Gastrocnemius medialis (tissue), 4 donors: ENCODE measurements at regions of chr5 and their contacts with region 1.

Region 1: DNA sequence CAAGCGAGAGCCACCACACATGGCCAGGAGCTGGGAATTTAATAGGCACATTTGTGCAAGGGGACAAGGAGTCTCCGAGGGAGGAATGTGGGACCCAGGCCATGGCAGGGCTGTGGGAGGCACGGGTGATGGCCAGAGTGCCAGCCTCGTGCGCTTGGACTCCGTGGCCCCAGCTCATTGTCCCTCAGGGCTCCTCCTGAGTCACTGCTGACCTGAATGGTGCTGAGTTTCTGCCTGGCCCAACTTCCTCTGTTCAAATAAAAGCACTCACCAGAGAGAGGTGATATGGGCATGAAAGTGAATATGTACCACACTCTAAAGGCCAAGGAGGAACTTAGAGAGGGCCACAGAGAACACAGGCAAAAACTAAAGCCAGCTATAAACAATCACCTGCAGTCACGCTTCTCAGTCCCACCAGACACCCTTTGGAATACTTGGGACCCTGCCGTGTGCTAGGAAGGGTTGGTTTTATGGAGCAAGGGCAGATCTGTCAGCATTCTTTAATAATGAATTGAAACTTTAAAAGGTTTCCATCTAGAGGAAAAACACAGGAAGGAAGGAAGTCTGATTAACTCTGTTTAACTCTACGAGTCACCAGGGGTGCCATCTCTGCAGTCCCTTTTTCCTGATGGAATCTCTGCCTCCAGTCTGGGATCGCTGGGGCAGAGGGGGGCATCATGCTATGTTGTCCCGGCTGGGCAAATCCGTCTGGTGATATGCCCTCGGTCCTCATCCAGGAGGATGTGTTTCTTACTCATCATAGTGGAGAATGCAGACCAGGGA is 25.1 kb upstream of the UBE2QL1 start:
- DNase-seq: peak; percentile 81 to 90
- ATAC-seq: peak; percentile 89 to 93
- H3K4me3 ChIP-seq: no peak overlapping the region
- H3K27ac ChIP-seq: peak overlapping the region; percentile 74 to 88 (median 85)
- H3K4me1 ChIP-seq: peaks cover 11 to 22% of the 10 kb centered on the region in 2 donors
- H3K27me3 ChIP-seq: no peaks in the 10 kb centered on the region
- CTCF ChIP-seq: no peak
- POLR2A ChIP-seq: peak in 1 of 2 donors; percentile 34

Region 2: DNA sequence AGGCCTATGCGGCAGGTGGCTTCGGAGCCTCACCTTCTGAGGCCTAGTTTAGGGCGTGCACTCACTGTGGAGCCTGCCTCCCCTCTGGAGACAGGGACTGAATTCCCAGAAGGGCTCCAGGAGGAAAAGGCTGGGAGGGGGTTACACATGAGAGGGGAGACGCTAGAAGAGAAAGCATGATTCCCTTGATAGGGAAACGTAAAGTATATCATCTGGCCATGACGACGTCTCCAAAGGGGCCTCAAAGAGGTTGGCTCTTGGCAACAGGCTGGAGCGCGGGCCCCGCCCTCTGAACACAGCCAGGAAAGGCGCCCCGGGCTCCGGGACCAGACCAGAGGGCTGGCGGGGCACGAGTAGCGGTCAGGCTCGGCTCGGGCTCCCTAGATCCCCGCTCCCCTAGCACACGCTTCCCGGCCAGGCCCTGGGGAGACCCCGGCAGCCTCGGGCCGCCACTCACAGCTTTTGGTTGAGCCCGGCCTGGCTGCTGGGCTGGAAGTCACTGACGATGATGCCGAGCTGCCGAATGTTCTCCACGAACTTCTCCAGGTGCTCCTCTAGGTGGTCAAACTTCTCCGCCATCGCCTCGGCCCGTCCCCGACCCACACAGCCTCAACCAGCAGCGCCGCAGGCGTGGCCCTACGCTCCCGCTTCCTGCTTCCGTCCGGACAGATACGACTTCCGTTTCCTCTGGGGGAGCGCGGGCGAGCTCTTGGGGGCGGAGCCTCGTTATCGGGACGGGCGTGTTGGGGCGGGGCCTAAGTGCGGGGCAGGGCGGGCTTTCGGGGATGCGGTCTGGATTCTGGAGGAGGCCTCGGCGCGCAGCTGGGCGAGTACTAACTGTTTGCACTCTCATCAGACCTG is 45.4 kb before region 1 on chr5 and contains the start of gene MED10:
- in situ Hi-C with region 1: no loop called
- intact Hi-C with region 1: loop called (anchors 2 kb)
- DNase-seq: peak; percentile 89 to 92
- ATAC-seq: peak; percentile 97 to 98
- H3K4me3 ChIP-seq: peak within 1 kb of the TSS; percentile 77 to 97 (median 87)
- H3K27ac ChIP-seq: peak within 1 kb of the TSS; percentile 78 to 92 (median 86)
- H3K4me1 ChIP-seq: peaks cover 17% of the 10 kb centered on the region in 2 donors
- H3K27me3 ChIP-seq: no peaks in the 10 kb centered on the region
- CTCF ChIP-seq: no peak
- POLR2A ChIP-seq: peak; percentile 62 to 79
- total RNA-seq, gene MED10: 15.9 to 37.5 (median 32.2) TPM

Region 3: DNA sequence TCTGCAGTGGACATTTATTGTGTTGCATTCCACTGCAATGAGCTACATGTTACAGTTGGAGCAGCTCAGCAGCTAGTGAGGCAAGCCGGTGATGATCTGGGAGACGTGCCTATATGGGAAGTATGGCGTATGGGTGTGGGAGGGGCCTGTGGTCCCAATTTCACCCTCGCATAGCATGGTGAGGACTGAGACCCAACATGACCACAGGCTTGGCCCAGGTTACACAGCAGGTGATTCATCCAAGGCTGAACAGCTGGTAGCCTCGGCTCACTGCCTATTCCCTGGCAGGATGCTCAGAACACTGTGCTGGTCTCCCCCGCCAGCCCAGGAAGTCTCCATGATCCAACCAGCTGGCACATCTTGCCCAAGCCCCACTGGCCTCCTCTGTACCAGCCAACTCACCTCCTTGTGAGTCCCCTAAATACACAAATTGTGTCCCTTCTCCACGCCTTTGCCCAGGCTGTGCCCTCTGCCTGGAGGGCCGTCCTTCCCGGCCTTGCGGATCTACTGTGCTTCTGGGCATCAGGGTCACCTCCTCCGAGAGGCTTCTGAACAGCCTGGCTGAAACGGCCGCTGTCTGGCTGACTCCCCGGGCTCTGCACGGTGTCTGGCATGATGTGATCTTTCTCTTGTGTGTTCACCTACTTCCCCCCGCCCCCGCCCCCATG is 127.9 kb after region 1 on chr5:
- in situ Hi-C with region 1: no loop called
- intact Hi-C with region 1: loop called (anchors 2 kb)
- DNase-seq: peak; percentile 93 to 97
- ATAC-seq: peak; percentile 93
- H3K4me3 ChIP-seq: peak overlapping the region in 3 of 4 donors; percentile 10 to 41 (median 25)
- H3K27ac ChIP-seq: peak overlapping the region; percentile 82 to 88 (median 84)
- H3K4me1 ChIP-seq: peaks cover 15 to 16% of the 10 kb centered on the region in 2 donors
- H3K27me3 ChIP-seq: no peaks in the 10 kb centered on the region
- CTCF ChIP-seq: no peak
- POLR2A ChIP-seq: peak in 1 of 2 donors; percentile 50